ENCODE measurements at regions of chr15 and their contacts with region 1.

Region 1: DNA sequence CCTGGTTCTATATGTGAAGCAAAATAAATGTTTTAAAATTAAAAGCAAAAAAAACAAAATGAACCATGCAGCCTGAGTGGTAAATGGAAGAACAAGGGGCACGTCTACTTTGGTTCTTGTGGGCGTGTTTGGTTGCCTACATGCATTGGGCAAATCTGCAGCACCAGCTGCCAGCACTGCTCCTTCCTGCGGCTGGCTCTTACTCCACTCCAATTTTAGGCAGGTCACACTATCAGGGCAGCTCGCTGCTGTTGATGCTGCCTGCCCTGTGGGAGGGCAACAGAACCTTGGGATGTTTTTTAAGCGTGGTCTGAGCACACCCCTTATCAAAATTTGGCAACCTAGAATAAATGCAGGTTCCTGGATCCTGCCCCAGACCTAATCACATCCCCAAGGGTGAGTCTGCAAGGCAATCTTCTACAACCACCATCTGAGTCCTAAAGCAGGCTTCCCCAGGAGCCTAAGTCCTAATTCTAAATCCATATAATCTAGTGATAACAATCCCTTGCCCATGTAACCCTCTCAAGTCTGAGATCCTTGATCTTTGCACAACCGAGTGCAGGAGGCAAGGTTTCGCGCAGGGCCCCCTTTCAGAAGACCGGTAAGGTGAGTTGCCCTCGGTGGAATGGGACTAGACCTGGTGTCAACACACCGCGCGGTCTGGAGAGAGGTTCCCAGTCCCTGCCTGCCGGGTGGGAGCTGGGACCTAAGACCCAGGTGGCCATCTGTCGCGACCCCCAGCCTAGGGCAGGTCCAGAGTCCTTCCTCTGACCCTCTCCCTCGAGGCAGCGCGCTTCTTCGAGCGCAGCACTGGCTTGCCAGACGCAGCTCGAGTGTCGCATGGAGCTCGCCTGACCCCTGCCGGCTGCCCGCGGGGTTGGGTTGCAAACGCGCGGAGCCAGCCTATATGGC is 15.9 kb downstream of the IVD start:
- DNase-seq: peak; percentile 87
- ATAC-seq: peak; percentile 99
- H3K4me3 Mint-ChIP-seq: no peak overlapping the region
- H3K27ac Mint-ChIP-seq: no peak overlapping the region
- H3K4me1 Mint-ChIP-seq: peaks cover 7% of the 10 kb centered on the region
- H3K27me3 Mint-ChIP-seq: no peaks in the 10 kb centered on the region

Region 2: GRCh38 chr15:40323239-40323952 is 98.1 kb before region 1 on chr15 and contains the start of gene INAFM2:
- CTCF ChIA-PET with region 1: interaction called, 29 read pairs
- DNase-seq: peak; percentile 93
- ATAC-seq: peak; percentile 92
- H3K4me3 Mint-ChIP-seq: peak within 1 kb of the TSS; percentile 67
- H3K27ac Mint-ChIP-seq: peak within 1 kb of the TSS; percentile 38
- H3K4me1 Mint-ChIP-seq: peaks cover 28% of the 10 kb centered on the region
- H3K27me3 Mint-ChIP-seq: peaks cover 16% of the 10 kb centered on the region
- total RNA-seq, gene INAFM2: 4.9 to 10.2 TPM

Region 3: GRCh38 chr15:40398413-40398873 is 23.1 kb before region 1 on chr15:
- CTCF ChIA-PET with region 1: interaction called, 10 read pairs
- DNase-seq: peak; percentile 67
- ATAC-seq: peak; percentile 77
- H3K4me3 Mint-ChIP-seq: peak overlapping the region; percentile 53
- H3K27ac Mint-ChIP-seq: peak overlapping the region; percentile 56
- H3K4me1 Mint-ChIP-seq: peaks cover 28% of the 10 kb centered on the region
- H3K27me3 Mint-ChIP-seq: no peaks in the 10 kb centered on the region

Region 4: GRCh38 chr15:40405501-40406381 is 15.8 kb before region 1 on chr15 and contains the start of gene IVD:
- CTCF ChIA-PET with region 1: interaction called, 18 read pairs
- DNase-seq: peak; percentile 97
- ATAC-seq: peak; percentile 99
- H3K4me3 Mint-ChIP-seq: peak within 1 kb of the TSS; percentile 76
- H3K27ac Mint-ChIP-seq: peak within 1 kb of the TSS; percentile 90
- H3K4me1 Mint-ChIP-seq: peaks cover 54% of the 10 kb centered on the region
- H3K27me3 Mint-ChIP-seq: no peaks in the 10 kb centered on the region
- total RNA-seq, gene IVD: 70.3 to 87.2 TPM

Region 5: GRCh38 chr15:40825661-40826088 is 404.2 kb after region 1 on chr15:
- CTCF ChIA-PET with region 1: no interaction called
- DNase-seq: no peak
- ATAC-seq: no peak
- H3K4me3 Mint-ChIP-seq: no peak overlapping the region
- H3K27ac Mint-ChIP-seq: no peak overlapping the region
- H3K4me1 Mint-ChIP-seq: peaks cover 4% of the 10 kb centered on the region
- H3K27me3 Mint-ChIP-seq: peaks cover 14% of the 10 kb centered on the region

Measured in activated CD8-positive, alpha-beta memory T cell treated with anti-CD3 and anti-CD28 coated beads, Interleukin-2, amount 10 ng/mL, durations not matched to agents 7 days and 5 days (primary cell).